Ovary (tissue), 10 donors: ENCODE measurements at regions of chr6 and their contacts with region 1.

Region 1: GRCh38 chr6:32796848-32797776 is 19.7 kb downstream of the HLA-DOB start:
- DNase-seq: peak; percentile 47 to 85 (median 83)
- H3K4me3 ChIP-seq: no peak overlapping the region
- H3K27ac ChIP-seq: no peak overlapping the region
- H3K4me1 ChIP-seq: no peaks in the 10 kb centered on the region
- H3K27me3 ChIP-seq: no peaks in the 10 kb centered on the region
- CTCF ChIP-seq: peak; percentile 64 to 88 (median 83)
- EP300 ChIP-seq: no peak
- POLR2A ChIP-seq: no peak

Region 2: GRCh38 chr6:30974488-30975252 is 1822.4 kb before region 1 on chr6:
- intact Hi-C with region 1: loop called in 1 of 4 experiments (anchors 5 kb)
- DNase-seq: no peak
- H3K4me3 ChIP-seq: no peak overlapping the region
- H3K27ac ChIP-seq: no peak overlapping the region
- H3K4me1 ChIP-seq: peaks cover 1% of the 10 kb centered on the region
- H3K27me3 ChIP-seq: no peaks in the 10 kb centered on the region
- CTCF ChIP-seq: no peak
- EP300 ChIP-seq: no peak
- POLR2A ChIP-seq: no peak

Region 3: GRCh38 chr6:32517654-32518445 is 279.3 kb before region 1 on chr6:
- intact Hi-C with region 1: no loop called
- DNase-seq: no peak
- H3K4me3 ChIP-seq: no peak overlapping the region
- H3K27ac ChIP-seq: no peak overlapping the region
- H3K4me1 ChIP-seq: no peaks in the 10 kb centered on the region
- H3K27me3 ChIP-seq: no peaks in the 10 kb centered on the region
- CTCF ChIP-seq: no peak
- EP300 ChIP-seq: no peak
- POLR2A ChIP-seq: no peak

Region 4: GRCh38 chr6:34082864-34083626 is 1285.9 kb after region 1 on chr6:
- intact Hi-C with region 1: no loop called
- DNase-seq: no peak
- H3K4me3 ChIP-seq: no peak overlapping the region
- H3K27ac ChIP-seq: no peak overlapping the region
- H3K4me1 ChIP-seq: no peaks in the 10 kb centered on the region
- H3K27me3 ChIP-seq: no peaks in the 10 kb centered on the region
- CTCF ChIP-seq: no peak
- EP300 ChIP-seq: no peak
- POLR2A ChIP-seq: no peak